H1 (cell line): ENCODE measurements at regions of chr3 and their contacts with region 1.

Region 1: GRCh38 chr3:32781210-32781968 is 36.4 kb upstream of the TRIM71 start:
- DNase-seq: peak; percentile 86 to 94
- H3K4me3 ChIP-seq: peak overlapping the region; percentile 45 to 65 (median 51)
- H3K27ac ChIP-seq: peak overlapping the region; percentile 94
- H3K4me1 ChIP-seq: peaks cover 16 to 31% (median 22%) of the 10 kb centered on the region in 4 experiments; a peak in 6 of 7 replicates
- H3K27me3 ChIP-seq: no peaks in the 10 kb centered on the region
- CTCF ChIP-seq: peak; percentile 77 to 88 (median 80)
- EP300 ChIP-seq: peak in 1 of 2 experiments; percentile 92; a peak in 2 of 3 replicates
- POLR2A ChIP-seq: peak; percentile 51 to 82; a peak in 2 of 3 replicates
- RAD21 ChIP-seq: peak; percentile 63 to 75

Region 2: GRCh38 chr3:32593903-32594525 is 187.4 kb before region 1 on chr3:
- CTCF ChIA-PET with region 1: no interaction called
- POLR2A ChIA-PET with region 1: no interaction called
- DNase-seq: no peak
- H3K4me3 ChIP-seq: no peak overlapping the region
- H3K27ac ChIP-seq: no peak overlapping the region
- H3K4me1 ChIP-seq: peaks cover 3 to 17% (median 11%) of the 10 kb centered on the region in 4 experiments; a peak in 6 of 7 replicates
- H3K27me3 ChIP-seq: no peaks in the 10 kb centered on the region; a peak in 2 of 7 replicates
- CTCF ChIP-seq: no peak
- EP300 ChIP-seq: no peak
- POLR2A ChIP-seq: no peak
- RAD21 ChIP-seq: no peak

Region 3: GRCh38 chr3:32764481-32764880 is 16.9 kb before region 1 on chr3:
- CTCF ChIA-PET with region 1: interaction called, 8 read pairs
- POLR2A ChIA-PET with region 1: interaction called, 31 read pairs
- DNase-seq: no peak
- H3K4me3 ChIP-seq: no peak overlapping the region
- H3K27ac ChIP-seq: no peak overlapping the region
- H3K4me1 ChIP-seq: no peaks in the 10 kb centered on the region; a peak in 1 of 7 replicates
- H3K27me3 ChIP-seq: no peaks in the 10 kb centered on the region
- CTCF ChIP-seq: no peak
- EP300 ChIP-seq: no peak
- POLR2A ChIP-seq: no peak
- RAD21 ChIP-seq: no peak

Region 4: DNA sequence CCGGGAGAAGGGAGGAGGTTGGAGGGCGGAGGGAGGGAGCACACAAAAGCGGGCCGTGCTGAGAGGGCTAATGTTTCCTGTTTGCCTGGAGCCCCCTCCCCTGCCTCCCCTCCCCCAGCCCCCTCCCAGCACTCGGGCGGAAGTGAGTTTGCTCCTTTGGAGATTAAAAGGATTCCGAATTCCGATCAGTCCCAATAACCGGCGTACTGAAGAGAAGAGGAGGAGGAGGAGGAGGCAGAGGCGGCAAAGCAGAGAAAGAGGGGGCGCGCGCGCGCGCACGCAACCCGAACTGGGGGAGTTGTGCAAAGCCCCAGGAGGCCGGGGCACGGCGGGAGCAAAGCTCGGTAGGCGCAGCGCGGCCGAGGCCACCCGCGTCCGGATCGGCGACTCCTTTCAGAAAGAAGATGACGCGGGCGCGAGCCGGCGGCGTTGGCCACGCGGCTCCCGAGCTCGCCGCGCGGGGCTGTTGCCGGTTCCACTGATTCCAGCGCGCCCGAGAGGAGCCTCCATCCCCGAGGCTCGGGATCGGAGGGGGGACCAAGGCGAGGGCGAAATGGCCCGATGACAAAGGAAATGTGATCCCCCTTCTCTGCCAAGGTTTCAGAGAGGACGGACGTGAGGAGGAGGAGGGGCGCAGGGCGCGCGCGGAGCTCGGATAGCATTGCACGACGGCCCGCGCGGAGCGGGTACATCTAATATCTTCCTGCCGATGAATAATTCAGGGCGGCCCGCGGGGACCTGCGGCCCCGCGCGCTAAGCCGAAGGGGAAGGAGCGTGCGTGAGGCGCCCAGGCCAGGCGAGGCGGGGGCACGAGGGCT is 35.3 kb after region 1 on chr3:
- CTCF ChIA-PET with region 1: interaction called, 25 read pairs
- POLR2A ChIA-PET with region 1: interaction called, 230 read pairs
- DNase-seq: peak; percentile 82 to 94
- H3K4me3 ChIP-seq: peak overlapping the region; percentile 88 to 98 (median 94)
- H3K27ac ChIP-seq: peak overlapping the region; percentile 95
- H3K4me1 ChIP-seq: peaks cover 9 to 27% (median 11%) of the 10 kb centered on the region in 4 experiments; a peak in 6 of 7 replicates
- H3K27me3 ChIP-seq: no peaks in the 10 kb centered on the region
- CTCF ChIP-seq: no peak
- EP300 ChIP-seq: peak in 1 of 2 experiments; percentile 19; a peak in 1 of 3 replicates
- POLR2A ChIP-seq: peak in 1 of 2 experiments; percentile 33; a peak in 1 of 3 replicates
- RAD21 ChIP-seq: no peak; a peak in 1 of 4 replicates

Region 5: GRCh38 chr3:32842531-32842931 is 61.1 kb after region 1 on chr3:
- CTCF ChIA-PET with region 1: interaction called, 4 read pairs
- POLR2A ChIA-PET with region 1: interaction called, 35 read pairs
- DNase-seq: no peak
- H3K4me3 ChIP-seq: peak overlapping the region in 3 of 4 experiments; percentile 12 to 57 (median 35); a peak in 5 of 8 replicates
- H3K27ac ChIP-seq: peak overlapping the region; percentile 51; the same call in 1 of the 2 replicates
- H3K4me1 ChIP-seq: peaks cover 43 to 68% (median 61%) of the 10 kb centered on the region in 4 experiments
- H3K27me3 ChIP-seq: no peaks in the 10 kb centered on the region
- CTCF ChIP-seq: no peak
- EP300 ChIP-seq: no peak
- POLR2A ChIP-seq: peak in 1 of 2 experiments; percentile 60; a peak in 2 of 3 replicates
- RAD21 ChIP-seq: no peak